ENCODE measurements at regions of chr1 and their contacts with region 1.

Region 1: DNA sequence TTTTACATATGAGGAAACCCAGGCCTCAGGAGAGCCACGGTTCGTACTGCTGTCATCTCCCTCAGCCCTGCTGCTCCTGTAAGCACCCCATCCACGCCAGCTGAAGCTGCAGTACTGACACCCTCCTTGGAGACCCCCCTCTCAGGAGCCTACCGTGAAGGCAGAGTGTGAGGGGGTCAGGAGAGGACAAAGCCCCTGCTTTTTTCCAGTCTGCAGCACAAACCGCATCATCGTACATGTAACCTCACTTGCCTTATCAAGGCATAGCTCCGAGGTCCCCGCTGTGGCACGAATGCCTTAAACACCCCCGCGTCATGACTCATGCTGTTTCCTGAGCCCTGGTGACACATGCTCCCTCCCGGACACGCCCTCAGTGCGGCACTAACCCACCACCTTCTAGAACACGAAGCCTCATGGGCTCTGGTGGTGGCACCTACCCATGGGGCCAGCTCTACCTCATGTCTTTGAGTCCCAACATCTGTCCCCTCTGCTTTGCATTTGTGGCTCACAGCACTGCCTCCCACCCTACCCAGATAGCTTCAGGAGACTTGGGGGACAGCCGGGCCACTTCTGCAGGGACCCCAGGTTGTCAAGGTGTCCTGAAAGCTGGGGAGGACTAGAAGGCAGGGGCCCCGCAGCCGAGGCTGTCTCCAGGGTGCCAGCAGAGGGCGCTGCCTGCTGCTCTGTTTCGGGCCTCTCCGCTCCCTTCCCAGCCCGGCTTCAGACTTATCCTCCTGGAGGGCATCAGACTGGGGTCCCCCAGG is 4.9 kb downstream of the SH3BGRL3 start:
- DNase-seq: peak in 1 of 2 experiments; percentile 94
- H3K4me3 ChIP-seq: no peak overlapping the region
- H3K27ac ChIP-seq: no peak overlapping the region
- H3K4me1 ChIP-seq: peaks cover 8 to 32% (median 19%) of the 10 kb centered on the region in 4 experiments
- H3K27me3 ChIP-seq: no peaks in the 10 kb centered on the region
- CTCF ChIP-seq: peak in 2 of 3 experiments; percentile 93 to 97; a peak in 3 of 4 replicates
- EP300 ChIP-seq: no peak
- POLR2A ChIP-seq: no peak
- RAD21 ChIP-seq: peak; percentile 89 to 91

Region 2: GRCh38 chr1:26190373-26190987 is 94.3 kb before region 1 on chr1 and contains the start of gene CATSPER4:
- CTCF ChIA-PET with region 1: interaction called, 15 read pairs
- POLR2A ChIA-PET with region 1: interaction called, 4 read pairs
- DNase-seq: peak; percentile 49 to 77
- H3K4me3 ChIP-seq: peak within 1 kb of the TSS in 1 of 4 experiments; percentile 23; a peak in 1 of 8 replicates
- H3K27ac ChIP-seq: no peak within 1 kb of the TSS
- H3K4me1 ChIP-seq: peaks cover 0 to 7% (median 2%) of the 10 kb centered on the region in 4 experiments; a peak in 3 of 7 replicates
- H3K27me3 ChIP-seq: no peaks in the 10 kb centered on the region
- CTCF ChIP-seq: peak; percentile 46 to 73 (median 64)
- EP300 ChIP-seq: no peak
- POLR2A ChIP-seq: 0 out of 3 replicates have a peak, but pooled peaks of 1 of the 2 experiments have one; percentile 16
- RAD21 ChIP-seq: peak; percentile 68 to 74
- total RNA-seq, gene CATSPER4: 0.65 and 0.90 TPM in 2 replicates

Region 3: GRCh38 chr1:26321315-26322041 is 36.7 kb after region 1 on chr1:
- CTCF ChIA-PET with region 1: interaction called, 1,530 read pairs
- POLR2A ChIA-PET with region 1: interaction called, 27 read pairs
- DNase-seq: peak; percentile 64 to 100
- H3K4me3 ChIP-seq: no peak overlapping the region
- H3K27ac ChIP-seq: no peak overlapping the region
- H3K4me1 ChIP-seq: peaks cover 4 to 8% (median 6%) of the 10 kb centered on the region in 4 experiments
- H3K27me3 ChIP-seq: no peaks in the 10 kb centered on the region
- CTCF ChIP-seq: peak; percentile 83 to 97 (median 92)
- EP300 ChIP-seq: no peak
- POLR2A ChIP-seq: no peak
- RAD21 ChIP-seq: peak; percentile 96 to 98

Region 4: DNA sequence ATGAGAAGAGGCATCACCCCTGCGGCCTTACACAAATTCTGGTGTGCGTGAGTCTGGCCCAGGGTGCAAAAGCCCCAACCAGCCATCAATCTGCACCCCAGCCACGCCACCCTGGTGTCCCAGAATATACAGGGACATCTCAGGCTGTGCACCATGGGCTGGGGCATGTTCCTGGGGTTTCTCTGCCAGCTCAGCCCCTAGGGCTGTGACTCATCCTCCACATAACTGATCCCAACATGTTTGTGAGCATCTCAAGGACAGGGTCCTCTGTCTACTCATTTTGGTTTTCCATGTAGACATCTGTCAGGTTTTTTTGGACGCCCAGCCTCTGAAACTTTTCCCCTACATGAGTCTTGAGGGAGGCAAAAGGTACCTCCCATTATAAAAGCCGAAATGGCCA is 87.3 kb after region 1 on chr1:
- CTCF ChIA-PET with region 1: interaction called, 297 read pairs
- POLR2A ChIA-PET with region 1: interaction called, 3 read pairs
- DNase-seq: no peak
- H3K4me3 ChIP-seq: no peak overlapping the region
- H3K27ac ChIP-seq: no peak overlapping the region
- H3K4me1 ChIP-seq: peaks cover 0 to 2% (median 0%) of the 10 kb centered on the region in 4 experiments; a peak in 3 of 7 replicates
- H3K27me3 ChIP-seq: no peaks in the 10 kb centered on the region
- CTCF ChIP-seq: no peak
- EP300 ChIP-seq: no peak
- POLR2A ChIP-seq: no peak
- RAD21 ChIP-seq: no peak

Region 5: GRCh38 chr1:26391450-26391849 is 106.7 kb after region 1 on chr1:
- CTCF ChIA-PET with region 1: interaction called, 90 read pairs
- POLR2A ChIA-PET with region 1: interaction called, 3 read pairs
- DNase-seq: no peak
- H3K4me3 ChIP-seq: no peak overlapping the region
- H3K27ac ChIP-seq: no peak overlapping the region
- H3K4me1 ChIP-seq: peaks cover 1 to 10% (median 3%) of the 10 kb centered on the region in 4 experiments; a peak in 6 of 7 replicates
- H3K27me3 ChIP-seq: no peaks in the 10 kb centered on the region
- CTCF ChIP-seq: peak; percentile 81 to 93 (median 83)
- EP300 ChIP-seq: no peak
- POLR2A ChIP-seq: no peak
- RAD21 ChIP-seq: peak; percentile 94

Region 6: DNA sequence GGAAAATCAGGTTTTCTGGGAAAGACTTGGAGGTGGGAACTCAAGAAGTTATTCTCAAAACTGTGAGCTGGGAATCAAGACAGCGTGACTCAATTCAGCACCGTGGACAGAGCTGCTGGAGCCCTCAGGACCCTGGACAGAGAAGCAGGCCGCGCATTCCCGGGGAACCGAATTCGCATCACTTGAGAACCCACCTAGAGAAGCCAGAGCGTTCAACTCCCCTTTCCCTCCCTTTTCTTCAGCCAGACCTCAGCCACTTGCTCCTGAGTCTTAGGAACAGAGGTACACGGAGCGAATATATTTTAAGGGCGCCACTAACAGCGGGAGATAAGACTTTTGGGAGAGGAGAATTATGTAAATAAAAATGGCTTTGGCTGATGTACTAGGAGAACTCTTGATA is 123.8 kb after region 1 on chr1:
- CTCF ChIA-PET with region 1: interaction called, 4 read pairs
- POLR2A ChIA-PET with region 1: interaction called, 13 read pairs
- DNase-seq: peak in 1 of 2 experiments; percentile 97
- H3K4me3 ChIP-seq: peak overlapping the region; percentile 41 to 78 (median 60); a peak in 6 of 8 replicates
- H3K27ac ChIP-seq: no peak overlapping the region
- H3K4me1 ChIP-seq: peaks cover 0 to 20% (median 6%) of the 10 kb centered on the region in 4 experiments; a peak in 6 of 7 replicates
- H3K27me3 ChIP-seq: no peaks in the 10 kb centered on the region
- CTCF ChIP-seq: no peak
- EP300 ChIP-seq: peak in 1 of 2 experiments; percentile 13; a peak in 1 of 3 replicates
- POLR2A ChIP-seq: no peak
- RAD21 ChIP-seq: peak in 1 of 2 experiments; percentile 16; a peak in 1 of 4 replicates

Region 7: GRCh38 chr1:26472901-26473845 is 188.4 kb after region 1 on chr1:
- CTCF ChIA-PET with region 1: interaction called, 10 read pairs
- POLR2A ChIA-PET with region 1: interaction called, 13 read pairs
- DNase-seq: peak; percentile 74 to 95
- H3K4me3 ChIP-seq: peak overlapping the region; percentile 71 to 96 (median 82)
- H3K27ac ChIP-seq: peak overlapping the region; percentile 99; the same call in 1 of the 2 replicates
- H3K4me1 ChIP-seq: peaks cover 8 to 13% (median 11%) of the 10 kb centered on the region in 4 experiments
- H3K27me3 ChIP-seq: peaks cover 0 to 4% (median 0%) of the 10 kb centered on the region in 4 experiments; a peak in 2 of 7 replicates
- CTCF ChIP-seq: no peak
- EP300 ChIP-seq: no peak
- POLR2A ChIP-seq: peak in 1 of 2 experiments; percentile 8; a peak in 1 of 3 replicates
- RAD21 ChIP-seq: no peak

Measured in H1 (cell line).